GM12878 (cell line): ENCODE measurements at regions of chr18 and their contacts with region 1.

Region 1: DNA sequence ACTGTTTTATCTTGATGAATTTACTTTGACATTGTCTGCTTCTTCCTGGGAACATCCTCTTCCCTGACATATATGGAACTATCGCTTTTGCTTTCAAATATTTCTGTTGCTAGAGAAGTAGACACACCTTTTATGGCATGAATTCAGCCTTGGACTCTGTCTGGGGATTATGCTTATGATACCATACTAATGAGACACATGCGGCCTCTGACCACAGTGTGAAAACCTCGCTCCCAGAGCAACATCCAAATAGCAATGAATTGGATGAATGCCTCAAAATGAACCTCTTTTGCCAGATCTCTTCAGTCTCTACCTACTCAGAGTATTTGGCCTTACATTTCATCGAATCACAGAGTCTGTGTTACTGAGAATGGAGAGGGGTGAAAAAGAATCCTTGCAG is 70.9 kb downstream of the PIEZO2 start:
- DNase-seq: peak; percentile 46
- ATAC-seq: peak; percentile 87
- H3K4me3 ChIP-seq: no peak overlapping the region; the same call in 1 of the 2 replicates
- H3K27ac ChIP-seq: peak overlapping the region; percentile 66
- H3K4me1 ChIP-seq: peaks cover 27% of the 10 kb centered on the region
- H3K27me3 ChIP-seq: no peaks in the 10 kb centered on the region
- CTCF ChIP-seq: no peak
- EP300 ChIP-seq: peak; percentile 64 to 78; a peak in 3 of 4 replicates
- POLR2A ChIP-seq: no peak
- RAD21 ChIP-seq: no peak

Region 2: DNA sequence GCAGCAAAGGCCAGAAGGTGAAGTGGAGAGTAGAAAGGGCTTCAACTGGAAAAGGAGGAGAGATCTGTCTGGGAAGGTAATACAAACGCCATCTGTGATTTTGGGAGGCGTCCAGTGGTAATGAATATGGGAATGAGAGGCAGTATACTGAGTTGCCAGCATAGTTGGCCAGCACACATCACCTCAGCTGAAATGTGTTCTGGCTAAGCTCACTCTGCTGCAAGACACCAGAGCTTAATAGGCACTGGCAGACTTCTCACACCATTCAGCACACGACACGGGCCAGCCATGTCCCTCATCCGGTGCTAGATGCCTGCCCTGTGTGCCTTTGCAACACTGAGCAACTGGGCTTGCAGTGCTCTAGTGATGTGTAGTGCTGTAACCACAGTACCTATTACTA is 206.2 kb before region 1 on chr18:
- CTCF ChIA-PET with region 1: no interaction called
- POLR2A ChIA-PET with region 1: no interaction called
- RAD21 ChIA-PET with region 1: no interaction called
- SMC1A ChIA-PET with region 1: no interaction called
- in situ Hi-C with region 1: no loop called
- intact Hi-C with region 1: no loop called
- DNase-seq: no peak
- ATAC-seq: no peak; the same call in 2 of the 3 replicates
- H3K4me3 ChIP-seq: no peak overlapping the region
- H3K27ac ChIP-seq: peak overlapping the region; percentile 28; the same call in 1 of the 2 replicates
- H3K4me1 ChIP-seq: peaks cover 25% of the 10 kb centered on the region
- H3K27me3 ChIP-seq: no peaks in the 10 kb centered on the region
- CTCF ChIP-seq: no peak
- EP300 ChIP-seq: no peak
- POLR2A ChIP-seq: no peak
- RAD21 ChIP-seq: no peak

Region 3: DNA sequence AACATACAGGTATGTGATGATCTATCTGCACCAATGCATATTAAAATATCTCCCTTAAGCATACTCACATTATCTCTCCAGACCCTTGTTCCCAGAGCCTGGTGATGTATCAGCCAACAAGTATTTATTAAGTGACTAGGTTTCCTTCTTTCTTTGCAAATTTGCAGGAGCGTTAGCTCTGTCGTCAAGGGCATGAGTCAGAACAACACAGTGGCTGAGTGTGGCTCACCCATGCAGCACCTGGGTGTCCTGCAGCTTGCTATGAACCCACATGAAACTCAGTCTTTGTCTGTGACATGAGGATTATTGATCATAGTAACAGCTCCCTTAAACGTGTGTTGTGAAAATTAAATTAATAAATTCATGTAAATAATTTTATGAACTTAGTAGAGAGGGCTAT is 25.7 kb before region 1 on chr18:
- CTCF ChIA-PET with region 1: interaction called, 4 read pairs
- POLR2A ChIA-PET with region 1: interaction called, 5 read pairs
- RAD21 ChIA-PET with region 1: interaction called, 9 read pairs
- SMC1A ChIA-PET with region 1: interaction called, 17 read pairs
- in situ Hi-C with region 1: no loop called
- intact Hi-C with region 1: no loop called
- DNase-seq: no peak
- ATAC-seq: peak; percentile 92
- H3K4me3 ChIP-seq: no peak overlapping the region
- H3K27ac ChIP-seq: peak overlapping the region; percentile 22; the same call in 1 of the 2 replicates
- H3K4me1 ChIP-seq: peaks cover 15% of the 10 kb centered on the region
- H3K27me3 ChIP-seq: no peaks in the 10 kb centered on the region
- CTCF ChIP-seq: no peak
- EP300 ChIP-seq: no peak; a peak in 1 of 4 replicates
- POLR2A ChIP-seq: no peak
- RAD21 ChIP-seq: no peak

Region 4: GRCh38 chr18:11089931-11090715 is 11.6 kb after region 1 on chr18:
- CTCF ChIA-PET with region 1: interaction called, 8 read pairs
- POLR2A ChIA-PET with region 1: interaction called, 3 read pairs
- RAD21 ChIA-PET with region 1: interaction called, 10 read pairs
- SMC1A ChIA-PET with region 1: interaction called, 7 read pairs
- in situ Hi-C with region 1: no loop called
- intact Hi-C with region 1: no loop called
- DNase-seq: no peak
- ATAC-seq: peak; percentile 51
- H3K4me3 ChIP-seq: peak overlapping the region; percentile 36; the same call in 1 of the 2 replicates
- H3K27ac ChIP-seq: peak overlapping the region; percentile 56
- H3K4me1 ChIP-seq: peaks cover 26% of the 10 kb centered on the region
- H3K27me3 ChIP-seq: no peaks in the 10 kb centered on the region
- CTCF ChIP-seq: no peak
- EP300 ChIP-seq: no peak
- POLR2A ChIP-seq: no peak
- RAD21 ChIP-seq: no peak